ENCODE measurements at regions of chrX and their contacts with region 1.

Region 1: GRCh38 chrX:134782796-134783195 is 124.5 kb upstream of the PLAC1 start:
- DNase-seq: no peak
- H3K4me3 ChIP-seq: no peak overlapping the region
- H3K27me3 ChIP-seq: no peaks in the 10 kb centered on the region
- CTCF ChIP-seq: peak; percentile 48; the same call in 1 of the 2 replicates

Region 2: DNA sequence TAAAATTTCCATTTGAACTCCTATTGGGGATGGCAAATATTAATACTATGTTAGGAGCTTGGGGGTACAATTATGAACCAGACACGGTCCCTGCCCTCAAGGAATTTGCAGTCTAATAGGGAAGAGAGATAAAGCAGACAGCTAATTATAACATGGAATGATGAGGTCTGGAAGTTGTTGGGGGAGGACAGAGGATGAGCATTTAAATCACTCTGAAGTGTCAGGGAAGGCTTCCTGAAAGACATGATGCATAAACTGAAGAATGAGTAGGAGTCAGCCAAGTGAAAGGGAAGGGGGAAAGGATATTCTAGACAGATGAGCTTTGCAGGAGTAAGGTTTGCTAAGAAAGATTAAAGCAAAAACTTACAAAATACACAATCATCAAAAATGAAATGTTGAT is 140.4 kb before region 1 on chrX:
- CTCF ChIA-PET with region 1: no interaction called
- POLR2A ChIA-PET with region 1: no interaction called
- DNase-seq: no peak
- H3K4me3 ChIP-seq: no peak overlapping the region
- H3K27me3 ChIP-seq: no peaks in the 10 kb centered on the region
- CTCF ChIP-seq: no peak

Region 3: DNA sequence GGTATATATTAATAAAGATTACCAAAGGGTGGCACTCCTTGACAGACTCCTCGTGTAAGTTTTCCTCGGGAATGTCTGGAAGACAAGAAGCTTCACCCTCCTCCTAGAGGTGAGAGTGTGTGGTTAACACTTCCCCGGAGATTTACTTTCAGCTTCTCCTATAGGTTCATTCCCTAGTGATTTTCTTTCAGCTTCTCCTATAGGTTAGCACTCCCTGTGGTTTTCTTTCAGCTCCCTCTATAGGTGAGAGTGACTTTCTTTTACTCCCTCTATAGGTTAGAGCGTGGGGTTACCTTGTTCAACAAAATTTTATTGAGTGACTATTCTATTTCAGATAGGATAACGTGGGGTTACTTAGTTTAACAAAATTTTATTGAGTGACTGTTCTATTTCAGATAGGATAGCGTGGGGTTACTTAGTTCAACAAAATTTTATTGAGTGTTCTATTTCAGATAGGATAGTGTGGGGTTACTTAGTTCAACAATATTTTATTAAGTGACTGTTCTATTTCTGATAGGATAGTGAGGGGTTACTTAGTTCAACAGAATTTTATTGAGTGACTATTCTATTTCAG is 18.5 kb before region 1 on chrX:
- CTCF ChIA-PET with region 1: no interaction called
- POLR2A ChIA-PET with region 1: interaction called, 12 read pairs
- DNase-seq: no peak
- H3K4me3 ChIP-seq: no peak overlapping the region
- H3K27me3 ChIP-seq: no peaks in the 10 kb centered on the region
- CTCF ChIP-seq: no peak